ENCODE measurements at regions of chr12 and their contacts with region 1.

Region 1: DNA sequence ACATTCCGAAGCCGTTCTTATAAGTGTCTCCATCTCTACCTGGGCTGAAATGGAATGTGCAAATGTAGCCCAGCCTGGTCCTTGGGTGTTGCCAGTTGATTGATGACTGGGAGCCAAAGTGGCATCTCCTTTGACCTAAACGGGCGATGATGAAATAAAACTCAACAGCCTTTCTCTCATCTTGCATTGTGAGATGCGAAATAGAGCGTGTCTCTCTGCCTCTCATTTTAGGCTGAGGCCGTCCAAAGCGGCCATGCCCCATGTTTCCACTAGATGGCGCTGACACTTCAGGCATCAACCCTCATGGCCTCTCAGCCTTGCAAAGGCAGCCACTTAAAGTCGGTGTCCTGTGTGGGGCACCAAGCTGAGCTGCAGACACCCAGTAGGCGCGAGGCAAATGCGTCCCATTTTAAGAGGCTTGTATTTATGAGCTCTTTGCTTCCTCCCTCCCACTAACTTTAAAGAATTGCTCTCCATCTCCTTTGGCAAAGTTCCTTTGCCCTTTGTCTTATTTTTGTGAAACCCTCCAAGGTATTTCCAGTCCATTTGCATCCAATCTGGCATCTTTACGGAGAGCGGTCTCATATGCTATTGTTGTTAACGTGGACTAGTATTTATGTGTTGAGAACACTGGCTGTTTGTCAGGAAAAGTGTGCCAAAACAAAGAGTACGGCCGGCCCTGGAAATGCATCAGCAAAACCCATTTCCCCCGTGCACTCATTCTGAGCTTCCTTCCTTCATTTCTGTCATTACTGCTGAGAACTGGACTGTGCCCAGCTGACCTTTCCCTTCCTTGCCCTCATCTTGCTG is 25.0 kb downstream of the GPRC5A start:
- DNase-seq: peak; percentile 91
- H3K4me3 Mint-ChIP-seq: no peak overlapping the region
- H3K27ac Mint-ChIP-seq: no peak overlapping the region
- H3K4me1 Mint-ChIP-seq: peaks cover 9% of the 10 kb centered on the region
- H3K27me3 Mint-ChIP-seq: peaks cover 12% of the 10 kb centered on the region

Region 2: DNA sequence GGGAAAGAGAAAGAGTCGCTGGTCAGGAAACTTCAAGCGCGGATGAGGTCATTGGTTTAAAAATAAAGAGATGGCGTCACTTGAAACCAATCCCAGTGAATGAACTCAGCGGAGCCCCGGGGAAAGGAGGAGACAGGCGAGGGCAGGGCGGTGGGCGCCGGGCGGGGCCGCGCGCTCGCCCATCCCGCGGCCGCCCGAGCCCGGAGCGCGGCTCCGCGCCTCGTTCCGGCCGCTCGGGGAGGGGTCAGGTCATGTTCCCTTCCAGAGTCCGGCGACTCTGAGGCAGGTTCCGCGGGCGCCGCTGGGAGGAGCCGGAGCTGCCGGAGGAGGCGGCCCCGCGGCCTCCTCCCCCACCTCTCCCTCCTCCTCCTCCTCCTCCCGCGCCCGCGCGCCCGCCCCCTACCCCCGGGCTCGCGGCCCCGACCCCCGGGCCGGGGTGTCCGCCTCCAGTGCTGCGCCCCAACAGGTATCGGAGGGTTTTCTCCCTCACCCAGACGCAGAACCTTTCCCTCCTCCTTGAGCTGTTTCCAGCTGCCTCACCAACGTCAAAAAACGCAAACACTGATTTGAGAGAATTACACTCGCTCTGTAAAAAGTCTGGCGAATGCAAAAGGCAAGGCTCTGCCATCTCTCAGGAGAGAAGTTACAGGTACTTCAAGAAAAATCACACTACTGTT is 353.6 kb before region 1 on chr12 and contains the start of gene DUSP16:
- CTCF ChIA-PET with region 1: no interaction called
- POLR2A ChIA-PET with region 1: no interaction called
- intact Hi-C with region 1: no loop called
- DNase-seq: peak; percentile 85
- H3K4me3 Mint-ChIP-seq: peak within 1 kb of the TSS; percentile 79
- H3K27ac Mint-ChIP-seq: peak within 1 kb of the TSS; percentile 92
- H3K4me1 Mint-ChIP-seq: peaks cover 37% of the 10 kb centered on the region
- H3K27me3 Mint-ChIP-seq: no peaks in the 10 kb centered on the region
- total RNA-seq, gene DUSP16: 70.2 to 82.1 TPM

Region 3: GRCh38 chr12:12983420-12984035 is 67.2 kb after region 1 on chr12:
- CTCF ChIA-PET with region 1: interaction called, 29 read pairs
- POLR2A ChIA-PET with region 1: no interaction called
- intact Hi-C with region 1: loop called (anchors 1 kb)
- DNase-seq: no peak
- H3K4me3 Mint-ChIP-seq: no peak overlapping the region
- H3K27ac Mint-ChIP-seq: no peak overlapping the region
- H3K4me1 Mint-ChIP-seq: peaks cover 2% of the 10 kb centered on the region
- H3K27me3 Mint-ChIP-seq: no peaks in the 10 kb centered on the region

Region 4: DNA sequence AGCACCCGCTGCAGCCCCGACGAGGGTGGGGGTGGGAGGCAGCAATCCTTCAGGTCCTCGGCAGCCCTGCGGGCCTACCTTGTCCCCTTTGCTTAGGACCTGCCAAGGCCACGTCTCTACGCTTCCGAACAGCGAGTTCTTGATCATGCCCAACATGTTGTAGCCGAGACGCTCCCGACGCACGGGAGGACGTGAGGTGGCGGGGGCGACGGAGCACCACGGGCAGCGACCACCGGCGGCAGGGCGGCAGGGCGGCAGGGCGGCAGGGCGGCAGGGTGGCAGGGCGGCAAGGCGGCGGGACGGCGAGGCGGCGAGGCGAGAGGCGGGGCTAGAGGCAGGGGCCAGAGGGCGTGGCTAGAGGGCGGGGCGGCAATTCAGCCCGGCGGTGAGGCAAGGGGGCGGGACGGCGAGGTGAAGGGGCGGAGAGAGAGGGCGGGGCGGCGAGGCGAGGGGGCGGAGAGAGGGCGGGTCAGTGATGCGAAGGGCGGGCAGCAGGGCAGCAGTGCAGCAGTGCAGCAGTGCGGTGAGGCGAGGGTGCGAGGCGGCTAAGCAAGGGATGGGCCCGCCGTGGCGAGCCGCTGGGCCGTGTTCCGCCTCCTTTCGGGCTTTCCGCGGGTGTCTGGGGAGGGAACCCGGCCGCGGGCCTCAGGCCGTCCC is 83.7 kb after region 1 on chr12 and contains the start of gene HEBP1:
- CTCF ChIA-PET with region 1: interaction called, 7 read pairs
- POLR2A ChIA-PET with region 1: no interaction called
- intact Hi-C with region 1: loop called (anchors 5 kb)
- DNase-seq: peak; percentile 97
- H3K4me3 Mint-ChIP-seq: peak within 1 kb of the TSS; percentile 82
- H3K27ac Mint-ChIP-seq: peak within 1 kb of the TSS; percentile 53
- H3K4me1 Mint-ChIP-seq: peaks cover 25% of the 10 kb centered on the region
- H3K27me3 Mint-ChIP-seq: peaks cover 6% of the 10 kb centered on the region
- total RNA-seq, gene HEBP1: 20.5 to 22.4 TPM

Region 5: GRCh38 chr12:13094347-13094746 is 178.0 kb after region 1 on chr12:
- CTCF ChIA-PET with region 1: interaction called, 8 read pairs
- POLR2A ChIA-PET with region 1: no interaction called
- intact Hi-C with region 1: loop called (anchors 1 kb)
- DNase-seq: no peak
- H3K4me3 Mint-ChIP-seq: no peak overlapping the region
- H3K27ac Mint-ChIP-seq: no peak overlapping the region
- H3K4me1 Mint-ChIP-seq: peaks cover 30% of the 10 kb centered on the region
- H3K27me3 Mint-ChIP-seq: no peaks in the 10 kb centered on the region

Region 6: DNA sequence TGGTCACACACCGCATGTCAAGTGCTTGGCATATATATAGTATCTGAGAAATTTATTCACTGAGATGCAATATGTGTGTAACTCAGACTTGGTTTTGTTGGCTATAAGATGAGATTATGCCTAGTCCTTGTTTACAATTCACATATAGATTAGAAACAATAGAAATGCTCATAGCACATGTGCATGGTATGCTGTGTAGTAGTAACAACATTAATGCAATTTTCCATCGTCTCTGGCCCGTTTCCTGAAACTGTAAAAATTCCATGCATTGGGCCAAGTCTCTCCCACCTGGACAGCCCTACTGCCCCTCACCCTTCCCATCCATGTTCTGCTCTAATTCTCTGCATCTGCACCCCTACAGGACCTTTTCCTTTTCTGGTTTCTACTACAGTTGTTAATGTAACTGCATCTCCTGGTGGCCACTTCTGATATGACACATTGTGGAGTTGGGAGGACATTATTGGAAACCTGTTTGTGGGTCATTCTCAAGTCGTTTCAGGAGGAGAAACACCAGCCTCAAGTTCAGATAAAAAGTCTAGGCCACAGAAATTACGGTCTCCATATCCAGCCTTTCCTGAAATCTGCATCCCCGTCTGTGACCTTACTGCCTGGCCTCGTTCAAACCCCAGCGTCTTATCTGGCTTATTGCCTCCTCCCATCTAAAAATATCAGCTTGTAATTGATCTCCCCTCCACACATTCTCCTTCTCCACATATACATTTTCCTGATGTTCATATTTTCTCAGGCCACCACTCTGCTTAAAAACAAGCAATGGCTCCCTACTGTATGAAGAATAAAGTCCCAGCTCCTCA is 317.7 kb after region 1 on chr12:
- CTCF ChIA-PET with region 1: interaction called, 17 read pairs
- POLR2A ChIA-PET with region 1: no interaction called
- intact Hi-C with region 1: loop called (anchors 1 kb)
- DNase-seq: peak; percentile 25
- H3K4me3 Mint-ChIP-seq: no peak overlapping the region
- H3K27ac Mint-ChIP-seq: no peak overlapping the region
- H3K4me1 Mint-ChIP-seq: no peaks in the 10 kb centered on the region
- H3K27me3 Mint-ChIP-seq: peaks cover 6% of the 10 kb centered on the region

Measured in activated CD4-positive, alpha-beta memory T cell treated with anti-CD3 and anti-CD28 coated beads for 36 hours (primary cell).